Activated CD4-positive, alpha-beta memory T cell treated with anti-CD3 and anti-CD28 coated beads for 36 hours (primary cell): ENCODE measurements at regions of chr14 and their contacts with region 1.

Region 1: DNA sequence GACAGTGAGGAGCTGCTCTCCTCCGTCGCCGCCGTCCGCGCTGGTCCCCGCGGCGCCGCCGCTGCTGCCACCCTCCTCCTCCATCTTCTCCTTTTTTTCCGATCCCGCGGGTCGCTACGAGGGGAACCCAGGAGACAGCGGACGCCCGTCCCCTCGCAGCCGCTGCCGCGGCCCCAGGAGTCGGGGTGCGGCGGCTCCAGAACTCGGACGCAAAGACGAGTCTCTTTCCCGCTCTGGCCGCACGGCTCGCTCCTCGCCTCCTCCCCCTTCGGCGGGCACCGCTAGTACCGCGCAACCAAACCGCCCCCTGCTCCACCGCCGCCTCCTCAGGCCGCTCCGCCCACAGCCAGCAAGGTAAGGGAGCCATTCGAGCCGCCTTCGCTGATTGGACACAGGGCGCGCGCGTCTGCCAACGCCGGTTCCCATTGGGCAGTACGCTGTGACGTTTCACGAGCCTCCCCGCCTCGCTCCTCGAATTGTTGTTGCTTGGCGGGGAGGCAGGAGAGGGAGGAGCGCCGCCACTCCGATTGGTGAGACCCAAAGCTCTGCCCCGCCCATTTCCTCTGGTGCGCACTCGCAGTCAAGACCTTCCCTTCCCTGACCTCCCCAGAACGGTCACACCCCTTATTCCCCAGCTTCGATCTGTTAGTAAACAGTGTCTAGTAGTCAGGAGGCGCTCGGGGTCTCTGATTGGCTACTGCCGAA is at the start of gene RPS6KA5:
- DNase-seq: peak; percentile 100
- H3K4me3 Mint-ChIP-seq: peak within 1 kb of the TSS; percentile 87
- H3K27ac Mint-ChIP-seq: peak within 1 kb of the TSS; percentile 61
- H3K4me1 Mint-ChIP-seq: peaks cover 57% of the 10 kb centered on the region
- H3K27me3 Mint-ChIP-seq: no peaks in the 10 kb centered on the region
- total RNA-seq, gene RPS6KA5: 18.8 to 19.3 TPM

Region 2: DNA sequence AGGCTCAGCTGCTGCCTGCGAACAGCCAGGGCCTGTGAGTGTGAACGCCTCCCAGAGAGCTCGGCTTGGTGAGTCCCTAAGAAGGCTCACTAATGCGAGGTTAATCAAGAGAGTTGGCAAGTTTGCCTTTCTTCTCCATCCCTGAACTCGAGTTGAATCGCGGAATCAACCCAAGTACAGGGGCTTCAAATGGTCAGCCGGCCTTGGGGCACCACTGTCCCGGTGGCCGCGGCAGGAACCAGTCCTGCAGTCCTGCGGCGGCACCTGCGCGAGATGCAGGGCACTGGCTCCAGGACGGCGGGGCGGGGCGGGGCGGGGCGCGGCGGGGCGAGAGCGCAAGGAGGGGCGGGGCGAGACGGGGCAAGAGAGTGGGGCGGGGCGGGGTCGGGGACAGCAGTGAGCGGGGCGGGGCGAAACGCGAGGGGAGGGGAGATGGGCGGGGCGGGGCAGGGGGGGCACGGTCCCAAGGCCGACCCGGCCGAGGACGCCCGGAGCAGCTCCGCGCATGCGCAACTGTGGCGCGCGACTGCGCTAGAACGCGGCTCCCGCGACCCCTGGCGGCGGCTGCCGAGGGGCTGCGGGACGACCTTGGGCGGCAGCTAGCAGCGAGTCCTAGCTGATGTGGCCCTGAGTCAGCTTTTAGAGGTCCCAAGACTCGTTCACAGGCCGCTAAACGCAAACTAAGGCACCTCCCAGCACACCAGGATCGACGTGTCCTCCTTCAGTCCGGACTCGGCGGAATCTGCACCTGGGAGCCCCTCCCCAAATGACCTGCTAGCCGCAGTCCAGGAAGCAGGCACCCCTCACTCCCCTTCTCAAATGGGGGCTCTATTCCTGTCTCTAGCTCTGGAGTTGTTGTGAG is 302.2 kb before region 1 on chr14:
- CTCF ChIA-PET with region 1: no interaction called
- POLR2A ChIA-PET with region 1: no interaction called
- intact Hi-C with region 1: loop called (anchors 2 kb)
- DNase-seq: peak; percentile 97
- H3K4me3 Mint-ChIP-seq: peak overlapping the region; percentile 73
- H3K27ac Mint-ChIP-seq: peak overlapping the region; percentile 75
- H3K4me1 Mint-ChIP-seq: peaks cover 22% of the 10 kb centered on the region
- H3K27me3 Mint-ChIP-seq: no peaks in the 10 kb centered on the region

Region 3: DNA sequence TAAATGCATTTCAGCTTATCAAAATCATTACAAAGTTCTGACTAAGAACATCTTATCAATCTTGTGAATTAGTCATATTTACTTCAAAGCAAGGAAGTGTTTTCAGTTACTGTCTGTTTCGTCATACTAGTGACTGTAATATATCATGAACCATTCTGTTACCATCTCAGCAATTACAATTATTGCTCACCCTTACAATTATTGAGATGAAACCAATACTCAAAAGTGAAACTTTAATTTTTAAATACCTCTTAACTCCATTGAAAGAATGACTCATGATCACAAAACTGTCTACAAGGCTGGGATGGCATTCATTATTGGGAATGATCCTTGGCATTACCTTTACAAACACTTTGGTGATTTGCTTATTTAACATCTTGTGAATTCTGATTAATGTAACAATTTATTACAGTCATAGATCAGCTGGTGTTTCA is 90.3 kb before region 1 on chr14:
- CTCF ChIA-PET with region 1: interaction called, 8 read pairs
- POLR2A ChIA-PET with region 1: interaction called, 19 read pairs
- intact Hi-C with region 1: loop called (anchors 1 kb)
- DNase-seq: no peak
- H3K4me3 Mint-ChIP-seq: peak overlapping the region; percentile 48
- H3K27ac Mint-ChIP-seq: peak overlapping the region; percentile 88
- H3K4me1 Mint-ChIP-seq: peaks cover 50% of the 10 kb centered on the region
- H3K27me3 Mint-ChIP-seq: no peaks in the 10 kb centered on the region

Region 4: DNA sequence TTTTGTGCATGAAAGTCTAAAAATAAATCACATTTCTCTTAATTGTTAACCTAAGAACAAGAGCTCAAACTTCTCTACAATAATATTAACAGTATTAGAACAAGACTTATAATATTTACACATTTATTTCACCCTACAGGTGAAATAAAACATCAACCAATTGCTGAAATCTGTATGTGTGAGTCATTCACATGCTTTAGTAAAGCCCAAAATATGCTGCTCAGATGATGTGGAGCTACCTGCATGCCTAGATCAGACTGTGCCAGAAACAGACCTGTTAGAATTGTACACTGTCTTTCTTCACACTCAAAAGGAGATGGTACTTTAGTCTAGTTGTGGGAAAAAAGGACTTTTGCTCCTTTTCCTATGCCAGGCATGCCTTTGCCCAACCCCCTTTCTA is 54.8 kb before region 1 on chr14:
- CTCF ChIA-PET with region 1: no interaction called
- POLR2A ChIA-PET with region 1: no interaction called
- intact Hi-C with region 1: no loop called
- DNase-seq: no peak
- H3K4me3 Mint-ChIP-seq: no peak overlapping the region
- H3K27ac Mint-ChIP-seq: no peak overlapping the region
- H3K4me1 Mint-ChIP-seq: peaks cover 40% of the 10 kb centered on the region
- H3K27me3 Mint-ChIP-seq: no peaks in the 10 kb centered on the region

Region 5: GRCh38 chr14:91038438-91038837 is 22.1 kb before region 1 on chr14:
- CTCF ChIA-PET with region 1: interaction called, 4 read pairs
- POLR2A ChIA-PET with region 1: interaction called, 17 read pairs
- intact Hi-C with region 1: no loop called
- DNase-seq: peak; percentile 45
- H3K4me3 Mint-ChIP-seq: no peak overlapping the region
- H3K27ac Mint-ChIP-seq: peak overlapping the region; percentile 42
- H3K4me1 Mint-ChIP-seq: peaks cover 75% of the 10 kb centered on the region
- H3K27me3 Mint-ChIP-seq: no peaks in the 10 kb centered on the region

Region 6: DNA sequence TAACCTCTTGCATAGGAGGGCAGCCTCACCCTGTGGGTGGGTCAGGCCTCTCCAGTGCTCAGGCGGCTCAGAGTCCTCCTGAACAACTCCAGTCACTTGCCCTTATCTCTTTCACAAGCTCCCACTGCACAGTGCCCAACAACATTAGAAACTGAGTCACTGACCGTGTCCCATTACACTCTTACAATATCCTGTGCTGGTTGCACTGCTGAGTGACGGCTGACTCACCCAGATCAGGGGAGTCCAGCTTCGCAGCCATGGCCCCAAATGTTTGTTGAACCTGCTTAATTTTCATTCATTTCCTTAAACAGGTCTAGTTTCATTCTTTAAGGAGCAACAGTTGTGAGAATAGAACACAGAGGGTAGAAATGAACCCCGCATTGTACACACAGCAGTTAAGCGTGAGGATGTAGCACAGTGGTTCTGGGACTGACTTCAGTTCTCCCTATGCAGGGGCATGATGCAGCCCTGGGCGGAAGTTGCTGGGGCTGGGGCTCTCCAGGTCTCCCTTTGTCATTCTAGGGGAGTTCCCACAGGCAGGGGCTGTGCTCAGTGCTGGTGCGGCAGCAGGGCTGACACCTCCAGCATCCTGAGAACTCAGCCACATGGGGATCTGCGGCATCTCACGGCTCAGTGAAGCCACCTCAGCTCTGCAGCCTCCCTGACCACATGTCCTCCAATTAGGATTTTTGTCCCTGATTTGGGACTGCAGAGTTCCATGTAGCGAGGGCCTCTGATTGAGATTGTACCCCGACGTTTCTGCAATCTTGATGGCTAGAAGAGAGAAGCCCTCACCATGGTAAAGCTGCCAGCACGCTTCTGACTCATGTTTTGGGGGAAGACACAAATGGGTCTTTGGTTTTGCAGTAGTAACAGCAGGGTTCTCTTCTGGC is 167.9 kb after region 1 on chr14:
- CTCF ChIA-PET with region 1: no interaction called
- POLR2A ChIA-PET with region 1: no interaction called
- intact Hi-C with region 1: loop called (anchors 2 kb)
- DNase-seq: peak; percentile 95
- H3K4me3 Mint-ChIP-seq: peak overlapping the region; percentile 59
- H3K27ac Mint-ChIP-seq: peak overlapping the region; percentile 94
- H3K4me1 Mint-ChIP-seq: peaks cover 94% of the 10 kb centered on the region
- H3K27me3 Mint-ChIP-seq: no peaks in the 10 kb centered on the region

Region 7: GRCh38 chr14:91317381-91318308 is 257.1 kb after region 1 on chr14:
- CTCF ChIA-PET with region 1: no interaction called
- POLR2A ChIA-PET with region 1: no interaction called
- intact Hi-C with region 1: loop called (anchors 5 kb)
- DNase-seq: peak; percentile 92
- H3K4me3 Mint-ChIP-seq: peak overlapping the region; percentile 60
- H3K27ac Mint-ChIP-seq: peak overlapping the region; percentile 94
- H3K4me1 Mint-ChIP-seq: peaks cover 78% of the 10 kb centered on the region
- H3K27me3 Mint-ChIP-seq: no peaks in the 10 kb centered on the region

Region 8: GRCh38 chr14:92088494-92088893 is 1028.0 kb after region 1 on chr14:
- CTCF ChIA-PET with region 1: no interaction called
- POLR2A ChIA-PET with region 1: no interaction called
- intact Hi-C with region 1: no loop called
- DNase-seq: no peak
- H3K4me3 Mint-ChIP-seq: no peak overlapping the region
- H3K27ac Mint-ChIP-seq: no peak overlapping the region
- H3K4me1 Mint-ChIP-seq: no peaks in the 10 kb centered on the region
- H3K27me3 Mint-ChIP-seq: no peaks in the 10 kb centered on the region